Ovary (tissue), 10 donors: ENCODE measurements at regions of chr10 and their contacts with region 1.

Region 1: DNA sequence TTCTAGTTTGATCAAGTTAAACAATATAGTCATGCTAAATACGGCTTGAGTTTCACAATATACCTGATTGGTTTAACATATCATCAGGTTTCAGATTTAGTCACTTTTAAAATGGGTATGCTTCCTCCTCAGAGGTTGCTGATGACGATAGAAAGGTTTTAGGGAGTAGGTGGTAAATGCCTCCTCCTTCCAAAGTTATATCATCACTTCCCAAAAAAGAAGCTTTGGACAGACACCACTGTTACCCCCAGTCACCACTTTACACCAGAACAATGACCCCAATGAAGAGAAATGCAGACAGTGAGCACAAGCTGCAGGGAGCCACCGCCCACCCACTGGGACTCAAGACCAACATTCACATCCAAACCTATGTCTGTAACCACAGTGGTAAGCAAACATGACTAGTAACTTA is 244.6 kb downstream of the SORCS1 start:
- DNase-seq: no peak
- H3K4me3 ChIP-seq: no peak overlapping the region
- H3K27ac ChIP-seq: no peak overlapping the region
- H3K4me1 ChIP-seq: no peaks in the 10 kb centered on the region
- H3K27me3 ChIP-seq: no peaks in the 10 kb centered on the region
- CTCF ChIP-seq: no peak
- EP300 ChIP-seq: no peak
- POLR2A ChIP-seq: no peak

Region 2: DNA sequence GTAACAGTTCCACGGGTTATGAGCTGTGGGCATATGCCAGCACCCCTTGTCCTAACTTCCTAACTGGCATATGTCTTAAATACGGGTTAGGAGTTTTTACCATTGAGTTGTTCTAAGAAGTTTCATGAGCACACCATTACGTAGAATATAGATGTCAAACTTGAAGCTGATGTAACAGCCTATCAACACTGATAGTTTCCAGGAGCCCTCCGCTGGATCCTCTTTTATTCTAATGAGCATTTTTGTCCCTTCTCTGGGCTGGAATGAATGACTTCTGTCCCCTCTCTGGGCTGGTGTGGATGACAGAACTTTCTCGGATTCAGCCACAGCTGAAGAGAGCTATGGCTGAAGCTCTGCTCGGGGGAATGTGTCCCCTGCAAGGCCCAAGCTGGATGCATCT is 11.7 kb before region 1 on chr10:
- intact Hi-C with region 1: loop called in 1 of 4 experiments (anchors 2 kb)
- DNase-seq: no peak
- H3K4me3 ChIP-seq: no peak overlapping the region
- H3K27ac ChIP-seq: no peak overlapping the region
- H3K4me1 ChIP-seq: no peaks in the 10 kb centered on the region
- H3K27me3 ChIP-seq: no peaks in the 10 kb centered on the region
- CTCF ChIP-seq: no peak
- EP300 ChIP-seq: no peak
- POLR2A ChIP-seq: no peak